ENCODE measurements at regions of chr4 and their contacts with region 1.

Region 1: DNA sequence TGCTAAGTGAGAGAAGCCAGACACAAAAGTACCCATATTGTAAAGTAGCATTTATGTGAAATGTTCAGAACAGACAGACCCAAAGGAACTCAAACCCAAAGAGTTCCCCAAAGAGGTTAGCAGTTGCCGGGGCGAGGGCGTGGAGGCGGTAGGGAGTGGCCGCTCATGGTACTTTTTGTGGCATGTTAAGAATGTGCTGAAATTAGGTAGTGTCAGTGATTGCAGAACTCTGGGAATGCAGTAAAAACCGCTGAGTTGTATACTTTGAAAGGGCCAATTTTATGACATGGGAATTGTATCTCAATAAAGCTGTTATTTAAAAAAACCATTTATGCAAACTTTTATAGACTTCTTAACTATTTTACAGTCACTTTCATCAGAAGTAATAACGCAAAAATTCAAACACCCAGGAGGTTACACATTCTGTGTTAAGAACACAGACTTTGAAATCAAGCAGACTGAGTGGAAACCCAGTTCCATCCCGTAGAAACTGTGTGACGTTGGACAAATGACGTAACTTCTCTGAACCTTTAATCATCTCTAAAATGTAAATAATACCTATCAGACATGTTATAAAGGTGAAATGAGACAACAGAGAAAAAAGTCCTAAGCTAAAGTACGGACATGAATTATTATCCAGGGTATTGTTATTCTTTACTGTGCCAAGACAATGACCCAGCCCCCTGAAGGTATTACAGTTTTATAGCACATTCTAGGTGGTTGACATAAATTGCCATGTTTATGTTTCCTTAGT is 19.6 kb downstream of the ZFP42 start:
- DNase-seq: no peak
- H3K4me3 ChIP-seq: no peak overlapping the region
- H3K27ac ChIP-seq: no peak overlapping the region
- H3K4me1 ChIP-seq: peaks cover 0 to 10% (median 3%) of the 10 kb centered on the region in 4 experiments; a peak in 5 of 7 replicates
- H3K27me3 ChIP-seq: no peaks in the 10 kb centered on the region
- CTCF ChIP-seq: no peak
- EP300 ChIP-seq: no peak
- POLR2A ChIP-seq: peak in 1 of 2 experiments; percentile 50; a peak in 1 of 3 replicates
- RAD21 ChIP-seq: no peak; a peak in 1 of 4 replicates

Region 2: GRCh38 chr4:188025476-188025875 is 10.3 kb after region 1 on chr4:
- CTCF ChIA-PET with region 1: no interaction called
- POLR2A ChIA-PET with region 1: interaction called, 10 read pairs
- DNase-seq: no peak
- H3K4me3 ChIP-seq: no peak overlapping the region
- H3K27ac ChIP-seq: no peak overlapping the region
- H3K4me1 ChIP-seq: peaks cover 3 to 16% (median 4%) of the 10 kb centered on the region in 4 experiments
- H3K27me3 ChIP-seq: no peaks in the 10 kb centered on the region
- CTCF ChIP-seq: no peak
- EP300 ChIP-seq: no peak
- POLR2A ChIP-seq: no peak
- RAD21 ChIP-seq: no peak

Region 3: GRCh38 chr4:188032170-188032569 is 17.0 kb after region 1 on chr4:
- CTCF ChIA-PET with region 1: interaction called, 4 read pairs
- POLR2A ChIA-PET with region 1: interaction called, 13 read pairs
- DNase-seq: peak in 1 of 2 experiments; percentile 57
- H3K4me3 ChIP-seq: peak overlapping the region; percentile 14 to 51 (median 22); a peak in 5 of 8 replicates
- H3K27ac ChIP-seq: peak overlapping the region; percentile 87
- H3K4me1 ChIP-seq: peaks cover 9 to 12% (median 11%) of the 10 kb centered on the region in 4 experiments; a peak in 6 of 7 replicates
- H3K27me3 ChIP-seq: no peaks in the 10 kb centered on the region
- CTCF ChIP-seq: no peak
- EP300 ChIP-seq: peak in 1 of 2 experiments; percentile 35; a peak in 1 of 3 replicates
- POLR2A ChIP-seq: no peak; a peak in 2 of 3 replicates
- RAD21 ChIP-seq: no peak

Region 4: GRCh38 chr4:188299161-188299560 is 284.0 kb after region 1 on chr4:
- CTCF ChIA-PET with region 1: no interaction called
- POLR2A ChIA-PET with region 1: no interaction called
- DNase-seq: no peak
- H3K4me3 ChIP-seq: no peak overlapping the region
- H3K27ac ChIP-seq: no peak overlapping the region
- H3K4me1 ChIP-seq: no peaks in the 10 kb centered on the region
- H3K27me3 ChIP-seq: no peaks in the 10 kb centered on the region
- CTCF ChIP-seq: no peak
- EP300 ChIP-seq: no peak
- POLR2A ChIP-seq: no peak
- RAD21 ChIP-seq: no peak